B cell (primary cell): ENCODE measurements at regions of chr13 and their contacts with region 1.

Region 1: GRCh38 chr13:32586080-32586900 is at the start of gene PDS5B:
- DNase-seq: peak; percentile 97
- ATAC-seq: peak; percentile 85
- H3K4me3 ChIP-seq: peak within 1 kb of the TSS; percentile 72 to 96 (median 81)
- H3K4me3 Mint-ChIP-seq: peak within 1 kb of the TSS; percentile 95
- H3K27ac ChIP-seq: peak within 1 kb of the TSS; percentile 69 to 83
- H3K27ac Mint-ChIP-seq: peak within 1 kb of the TSS; percentile 91
- H3K4me1 ChIP-seq: peaks cover 20 to 23% of the 10 kb centered on the region in 2 donors
- H3K4me1 Mint-ChIP-seq: peaks cover 39% of the 10 kb centered on the region
- H3K27me3 ChIP-seq: peaks cover 0 to 6% (median 0%) of the 10 kb centered on the region in 4 experiments
- H3K27me3 Mint-ChIP-seq: no peaks in the 10 kb centered on the region
- CTCF ChIP-seq: peak; percentile 81
- total RNA-seq, gene PDS5B: 62.9 and 66.2 TPM in 2 replicates

Region 2: DNA sequence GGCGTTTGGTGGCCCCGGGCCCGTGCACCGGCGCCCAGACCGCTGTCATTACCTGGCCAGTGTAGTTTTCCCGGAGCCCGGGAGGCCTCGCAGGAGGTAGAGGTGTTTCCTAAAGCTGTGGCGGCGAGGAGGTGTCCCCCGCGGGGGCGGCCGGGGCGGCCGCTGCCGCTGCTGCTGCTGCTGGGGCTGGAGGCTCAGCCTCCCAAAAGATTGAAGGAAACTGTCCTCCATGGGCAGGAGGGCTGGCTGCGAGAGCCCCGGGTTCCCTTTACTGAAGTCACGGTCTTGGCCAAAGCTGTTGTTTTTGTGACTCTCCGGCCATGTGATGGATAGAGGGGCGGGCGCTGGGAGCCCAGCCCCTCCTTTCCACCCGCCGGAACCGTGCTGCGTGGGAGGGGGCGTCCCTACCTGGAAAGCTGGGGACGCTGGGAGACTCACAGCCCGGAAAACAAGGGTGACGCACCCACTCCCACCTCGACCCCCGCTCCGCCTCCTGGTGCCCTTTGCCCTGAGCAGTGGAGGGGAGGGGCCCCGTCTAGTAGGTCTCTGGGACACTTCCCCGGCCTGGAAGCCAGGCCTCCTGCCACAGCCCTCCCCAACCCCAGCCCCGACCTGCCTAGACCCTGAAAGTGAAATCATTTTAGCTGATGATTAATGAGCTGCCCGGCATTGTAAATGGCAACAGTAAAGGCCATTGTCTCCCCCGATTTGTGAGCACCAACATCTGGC is 158.3 kb before region 1 on chr13 and contains the start of gene N4BP2L1:
- CTCF ChIA-PET with region 1: interaction called, 11 read pairs
- POLR2A ChIA-PET with region 1: interaction called, 6 read pairs
- intact Hi-C with region 1: loop called (anchors 1 kb)
- DNase-seq: peak; percentile 93
- ATAC-seq: peak; percentile 74
- H3K4me3 ChIP-seq: peak within 1 kb of the TSS; percentile 73 to 93 (median 80)
- H3K4me3 Mint-ChIP-seq: peak within 1 kb of the TSS; percentile 88
- H3K27ac ChIP-seq: peak within 1 kb of the TSS; percentile 95 to 98
- H3K27ac Mint-ChIP-seq: peak within 1 kb of the TSS; percentile 96
- H3K4me1 ChIP-seq: peaks cover 28 to 47% of the 10 kb centered on the region in 2 donors
- H3K4me1 Mint-ChIP-seq: peaks cover 48% of the 10 kb centered on the region
- H3K27me3 ChIP-seq: no peaks in the 10 kb centered on the region
- H3K27me3 Mint-ChIP-seq: no peaks in the 10 kb centered on the region
- CTCF ChIP-seq: no peak
- total RNA-seq, gene N4BP2L1: 52.8 and 59.0 TPM in 2 replicates

Region 3: GRCh38 chr13:32639502-32640105 is 53.3 kb after region 1 on chr13:
- CTCF ChIA-PET with region 1: interaction called, 41 read pairs
- POLR2A ChIA-PET with region 1: interaction called, 4 read pairs
- intact Hi-C with region 1: loop called (anchors 1 kb)
- DNase-seq: peak; percentile 72
- ATAC-seq: peak; percentile 80
- H3K4me3 ChIP-seq: no peak overlapping the region
- H3K4me3 Mint-ChIP-seq: no peak overlapping the region
- H3K27ac ChIP-seq: no peak overlapping the region
- H3K27ac Mint-ChIP-seq: no peak overlapping the region
- H3K4me1 ChIP-seq: peaks cover 0 to 11% of the 10 kb centered on the region in 2 donors
- H3K4me1 Mint-ChIP-seq: peaks cover 33% of the 10 kb centered on the region
- H3K27me3 ChIP-seq: no peaks in the 10 kb centered on the region
- H3K27me3 Mint-ChIP-seq: no peaks in the 10 kb centered on the region
- CTCF ChIP-seq: peak; percentile 93

Region 4: GRCh38 chr13:32650705-32651311 is 64.5 kb after region 1 on chr13:
- CTCF ChIA-PET with region 1: interaction called, 81 read pairs
- POLR2A ChIA-PET with region 1: no interaction called
- intact Hi-C with region 1: loop called (anchors 1 kb)
- DNase-seq: peak; percentile 71
- ATAC-seq: peak; percentile 74
- H3K4me3 ChIP-seq: no peak overlapping the region
- H3K4me3 Mint-ChIP-seq: no peak overlapping the region
- H3K27ac ChIP-seq: no peak overlapping the region
- H3K27ac Mint-ChIP-seq: no peak overlapping the region
- H3K4me1 ChIP-seq: peaks cover 26 to 38% of the 10 kb centered on the region in 2 donors
- H3K4me1 Mint-ChIP-seq: peaks cover 53% of the 10 kb centered on the region
- H3K27me3 ChIP-seq: no peaks in the 10 kb centered on the region
- H3K27me3 Mint-ChIP-seq: no peaks in the 10 kb centered on the region
- CTCF ChIP-seq: peak; percentile 89

Region 5: DNA sequence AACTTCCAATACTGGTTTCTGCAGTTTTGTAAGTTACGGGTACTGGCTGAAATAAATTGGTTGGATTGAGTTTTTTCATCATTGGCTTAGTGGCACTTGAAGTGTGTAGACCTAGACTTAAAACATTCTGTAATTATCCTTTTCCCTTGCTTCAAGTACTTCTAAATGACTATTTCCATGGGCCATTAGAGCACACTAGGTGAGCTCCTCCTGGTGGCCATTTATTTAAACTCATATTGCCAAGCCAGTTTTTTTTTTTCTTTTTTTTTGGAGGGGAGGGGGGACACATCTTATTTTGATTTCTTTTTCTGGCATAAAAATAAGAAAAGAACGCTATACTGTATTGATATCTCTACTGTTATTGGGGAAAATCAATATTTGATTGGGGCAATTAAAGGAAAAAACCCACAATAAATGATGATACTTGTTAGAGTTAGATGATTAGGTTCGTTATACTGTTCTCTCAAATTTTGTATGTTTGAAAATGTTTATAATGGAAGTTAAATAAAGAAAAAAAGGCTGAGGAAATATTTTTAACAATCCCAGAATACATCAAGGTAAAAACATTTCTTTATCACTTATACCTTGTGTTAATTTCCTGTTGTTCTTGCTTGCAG is 82.8 kb after region 1 on chr13:
- CTCF ChIA-PET with region 1: interaction called, 38 read pairs
- POLR2A ChIA-PET with region 1: no interaction called
- intact Hi-C with region 1: loop called (anchors 1 kb)
- DNase-seq: peak; percentile 63
- ATAC-seq: peak; percentile 41
- H3K4me3 ChIP-seq: no peak overlapping the region
- H3K4me3 Mint-ChIP-seq: no peak overlapping the region
- H3K27ac ChIP-seq: no peak overlapping the region
- H3K27ac Mint-ChIP-seq: no peak overlapping the region
- H3K4me1 ChIP-seq: no peaks in the 10 kb centered on the region
- H3K4me1 Mint-ChIP-seq: no peaks in the 10 kb centered on the region
- H3K27me3 ChIP-seq: no peaks in the 10 kb centered on the region
- H3K27me3 Mint-ChIP-seq: no peaks in the 10 kb centered on the region
- CTCF ChIP-seq: peak; percentile 83